GM12878 (cell line): ENCODE measurements at regions of chr22 and their contacts with region 1.

Region 1: GRCh38 chr22:35150183-35151107 is 84.5 kb downstream of the ISX start:
- DNase-seq: no peak
- ATAC-seq: peak; percentile 87
- H3K4me3 ChIP-seq: no peak overlapping the region
- H3K27ac ChIP-seq: peak overlapping the region; percentile 56
- H3K4me1 ChIP-seq: peaks cover 19% of the 10 kb centered on the region
- H3K27me3 ChIP-seq: no peaks in the 10 kb centered on the region
- CTCF ChIP-seq: peak; percentile 79 to 87 (median 82)
- EP300 ChIP-seq: no peak
- POLR2A ChIP-seq: no peak
- RAD21 ChIP-seq: peak; percentile 88

Region 2: DNA sequence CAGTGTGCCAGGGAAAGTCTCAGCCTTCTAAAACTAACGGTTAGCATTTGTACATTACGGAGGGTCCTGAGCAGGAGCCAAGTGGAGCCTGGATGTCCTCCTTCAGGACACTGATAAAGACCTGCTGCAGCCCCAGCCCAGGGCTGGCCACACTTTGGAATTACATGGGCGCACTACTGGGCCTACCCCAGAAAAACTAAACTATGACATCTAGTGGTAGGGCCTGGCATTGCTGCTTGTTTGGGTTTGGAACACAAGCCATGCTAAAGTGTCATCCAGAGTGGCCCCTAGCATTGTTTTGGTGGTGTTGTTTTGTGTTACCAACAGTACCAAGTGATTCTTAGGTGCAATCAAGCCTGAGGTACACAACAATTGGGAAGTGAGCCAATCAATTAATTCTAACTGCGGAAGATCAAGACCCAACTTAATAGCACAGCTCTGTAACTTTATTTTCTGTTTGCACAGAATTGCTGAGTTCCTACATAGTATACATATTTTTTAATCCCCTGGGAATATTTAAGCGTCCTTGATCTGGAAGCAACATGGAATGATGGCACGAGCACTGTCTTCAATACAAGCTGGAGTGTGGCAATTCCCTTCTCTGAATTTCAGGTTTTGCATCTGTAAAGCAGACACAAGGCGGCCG is 1570.9 kb before region 1 on chr22:
- CTCF ChIA-PET with region 1: no interaction called
- POLR2A ChIA-PET with region 1: no interaction called
- RAD21 ChIA-PET with region 1: no interaction called
- SMC1A ChIA-PET with region 1: no interaction called
- in situ Hi-C with region 1: loop called (anchors 5 kb)
- intact Hi-C with region 1: no loop called
- DNase-seq: no peak
- ATAC-seq: peak; percentile 97
- H3K4me3 ChIP-seq: no peak overlapping the region
- H3K27ac ChIP-seq: no peak overlapping the region
- H3K4me1 ChIP-seq: peaks cover 3% of the 10 kb centered on the region; the same call in 1 of the 2 replicates
- H3K27me3 ChIP-seq: no peaks in the 10 kb centered on the region
- CTCF ChIP-seq: peak; percentile 86 to 98 (median 95)
- EP300 ChIP-seq: no peak
- POLR2A ChIP-seq: no peak
- RAD21 ChIP-seq: peak; percentile 95

Region 3: GRCh38 chr22:34414484-34415440 is 735.7 kb before region 1 on chr22:
- CTCF ChIA-PET with region 1: interaction called, 7 read pairs
- POLR2A ChIA-PET with region 1: no interaction called
- RAD21 ChIA-PET with region 1: interaction called, 8 read pairs
- SMC1A ChIA-PET with region 1: interaction called, 6 read pairs
- in situ Hi-C with region 1: no loop called
- intact Hi-C with region 1: loop called (anchors 1 kb)
- DNase-seq: peak; percentile 39
- ATAC-seq: peak; percentile 75
- H3K4me3 ChIP-seq: no peak overlapping the region
- H3K27ac ChIP-seq: no peak overlapping the region
- H3K4me1 ChIP-seq: no peaks in the 10 kb centered on the region
- H3K27me3 ChIP-seq: no peaks in the 10 kb centered on the region
- CTCF ChIP-seq: peak; percentile 80 to 91 (median 83); a peak in 4 of 6 replicates
- EP300 ChIP-seq: no peak
- POLR2A ChIP-seq: no peak
- RAD21 ChIP-seq: peak; percentile 95

Region 4: GRCh38 chr22:34950489-34950888 is 200.0 kb before region 1 on chr22:
- CTCF ChIA-PET with region 1: no interaction called
- POLR2A ChIA-PET with region 1: no interaction called
- RAD21 ChIA-PET with region 1: no interaction called
- SMC1A ChIA-PET with region 1: no interaction called
- in situ Hi-C with region 1: loop called (anchors 5 kb)
- intact Hi-C with region 1: no loop called
- DNase-seq: no peak
- ATAC-seq: no peak
- H3K4me3 ChIP-seq: no peak overlapping the region
- H3K27ac ChIP-seq: no peak overlapping the region
- H3K4me1 ChIP-seq: no peaks in the 10 kb centered on the region
- H3K27me3 ChIP-seq: no peaks in the 10 kb centered on the region
- CTCF ChIP-seq: no peak
- EP300 ChIP-seq: no peak
- POLR2A ChIP-seq: no peak
- RAD21 ChIP-seq: no peak

Region 5: GRCh38 chr22:35043252-35043931 is 107.1 kb before region 1 on chr22:
- CTCF ChIA-PET with region 1: interaction called, 69 read pairs
- POLR2A ChIA-PET with region 1: interaction called, 5 read pairs
- RAD21 ChIA-PET with region 1: interaction called, 32 read pairs
- SMC1A ChIA-PET with region 1: interaction called, 10 read pairs
- in situ Hi-C with region 1: no loop called
- intact Hi-C with region 1: loop called (anchors 1 kb)
- DNase-seq: no peak
- ATAC-seq: peak; percentile 85
- H3K4me3 ChIP-seq: no peak overlapping the region
- H3K27ac ChIP-seq: no peak overlapping the region
- H3K4me1 ChIP-seq: peaks cover 21% of the 10 kb centered on the region
- H3K27me3 ChIP-seq: no peaks in the 10 kb centered on the region
- CTCF ChIP-seq: peak; percentile 44 to 51 (median 48)
- EP300 ChIP-seq: no peak
- POLR2A ChIP-seq: no peak
- RAD21 ChIP-seq: peak; percentile 76

Region 6: DNA sequence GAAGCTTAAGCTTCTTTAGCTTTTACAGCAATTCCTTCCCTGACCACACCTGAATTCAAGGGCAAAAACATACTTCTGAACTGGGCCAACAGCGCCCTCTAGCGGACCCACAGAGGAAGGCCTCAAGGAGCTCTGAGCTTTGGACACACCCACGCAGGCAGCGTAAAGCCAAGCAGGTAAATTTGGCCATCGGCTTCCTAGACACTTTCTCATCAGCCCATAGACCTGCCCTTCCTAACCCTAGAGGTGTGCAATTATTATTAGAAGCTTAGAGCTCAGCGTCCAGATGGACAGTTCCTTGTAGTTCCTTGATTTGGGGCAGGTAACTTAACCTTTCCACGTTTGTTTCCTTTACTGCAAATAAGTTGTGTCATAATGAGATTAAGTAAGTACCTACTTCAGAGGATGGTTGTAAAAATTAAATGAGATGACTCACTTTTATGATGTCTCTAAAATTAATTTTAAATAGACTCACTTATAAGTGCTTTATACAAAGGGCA is 81.2 kb after region 1 on chr22:
- CTCF ChIA-PET with region 1: interaction called, 132 read pairs
- POLR2A ChIA-PET with region 1: no interaction called
- RAD21 ChIA-PET with region 1: interaction called, 48 read pairs
- SMC1A ChIA-PET with region 1: interaction called, 12 read pairs
- in situ Hi-C with region 1: no loop called
- intact Hi-C with region 1: loop called (anchors 1 kb)
- DNase-seq: peak; percentile 33
- ATAC-seq: peak; percentile 82
- H3K4me3 ChIP-seq: no peak overlapping the region
- H3K27ac ChIP-seq: no peak overlapping the region
- H3K4me1 ChIP-seq: peaks cover 3% of the 10 kb centered on the region
- H3K27me3 ChIP-seq: no peaks in the 10 kb centered on the region
- CTCF ChIP-seq: peak; percentile 92 to 96 (median 95)
- EP300 ChIP-seq: no peak
- POLR2A ChIP-seq: no peak
- RAD21 ChIP-seq: peak; percentile 76